ENCODE measurements at regions of chr12 and their contacts with region 1.

Region 1: DNA sequence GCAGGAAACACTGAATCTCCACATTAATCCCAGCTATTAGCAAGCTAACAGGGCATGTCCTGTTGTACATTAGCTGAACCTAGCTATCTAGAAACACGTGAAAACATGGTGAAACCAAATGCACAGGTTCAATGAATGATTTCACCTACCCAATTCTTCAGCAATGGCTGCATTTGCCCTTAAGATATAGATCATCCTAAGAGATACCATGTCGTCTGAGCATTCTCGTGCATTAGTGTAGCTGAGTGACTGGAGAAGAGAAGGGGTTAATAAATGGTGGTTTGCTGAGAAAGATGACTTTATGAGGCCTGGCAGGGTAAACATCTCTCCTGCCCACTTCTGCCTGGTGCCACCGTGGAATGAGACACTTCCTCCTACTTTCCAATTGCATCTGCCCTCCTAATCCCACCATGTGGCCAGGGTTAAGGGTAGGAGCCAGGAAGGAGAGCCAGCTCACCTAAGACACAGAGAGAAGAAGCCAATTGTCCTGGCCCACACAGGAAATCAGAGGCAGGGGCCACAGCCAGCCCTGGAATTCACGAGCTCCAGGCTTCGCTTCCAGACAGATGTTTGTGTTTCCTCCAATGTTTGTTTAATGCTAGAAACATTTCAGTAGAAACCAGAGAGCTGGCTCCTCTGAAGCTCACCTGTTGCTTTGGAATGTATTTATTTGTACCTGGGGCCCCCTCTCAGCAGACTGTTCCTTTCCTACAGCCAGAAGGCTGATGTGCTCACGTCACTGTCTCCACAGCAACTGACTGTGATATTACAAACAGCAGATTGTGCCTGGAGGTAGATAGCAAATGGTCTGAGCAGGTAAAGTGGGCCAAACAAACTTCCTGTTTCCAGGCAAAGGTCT is 126.0 kb upstream of the PARP11 start:
- DNase-seq: peak; percentile 50
- H3K4me3 ChIP-seq: no peak overlapping the region
- H3K27ac ChIP-seq: no peak overlapping the region
- H3K4me1 ChIP-seq: no peaks in the 10 kb centered on the region
- H3K27me3 ChIP-seq: no peaks in the 10 kb centered on the region
- CTCF ChIP-seq: no peak

Region 2: GRCh38 chr12:3885277-3886094 is 113.7 kb before region 1 on chr12:
- intact Hi-C with region 1: loop called (anchors 10 kb)
- DNase-seq: peak; percentile 29
- H3K4me3 ChIP-seq: peak overlapping the region; percentile 21
- H3K27ac ChIP-seq: peak overlapping the region; percentile 52
- H3K4me1 ChIP-seq: peaks cover 3% of the 10 kb centered on the region
- H3K27me3 ChIP-seq: no peaks in the 10 kb centered on the region
- CTCF ChIP-seq: peak; percentile 64

Measured in colonic mucosa (tissue), 4 donors.